Psoas muscle (tissue), 8 donors: ENCODE measurements at regions of chr5 and their contacts with region 1.

Region 1: GRCh38 chr5:173963867-173964441 is 25.0 kb upstream of the C5orf47 start:
- DNase-seq: no peak
- ATAC-seq: peak; percentile 18 to 35 (median 32)
- H3K4me3 ChIP-seq: peak overlapping the region; percentile 42
- H3K27ac ChIP-seq: peak overlapping the region; percentile 91
- H3K4me1 ChIP-seq: peaks cover 43% of the 10 kb centered on the region
- H3K27me3 ChIP-seq: no peaks in the 10 kb centered on the region
- CTCF ChIP-seq: no peak

Region 2: GRCh38 chr5:173925448-173926071 is 38.4 kb before region 1 on chr5:
- intact Hi-C with region 1: loop called in 1 of 2 experiments (anchors 5 kb)
- DNase-seq: no peak
- ATAC-seq: peak in 2 of 4 donors; percentile 22 to 31
- H3K4me3 ChIP-seq: no peak overlapping the region
- H3K27ac ChIP-seq: peak overlapping the region; percentile 94
- H3K4me1 ChIP-seq: peaks cover 95% of the 10 kb centered on the region
- H3K27me3 ChIP-seq: no peaks in the 10 kb centered on the region
- CTCF ChIP-seq: peak; percentile 41

Region 3: DNA sequence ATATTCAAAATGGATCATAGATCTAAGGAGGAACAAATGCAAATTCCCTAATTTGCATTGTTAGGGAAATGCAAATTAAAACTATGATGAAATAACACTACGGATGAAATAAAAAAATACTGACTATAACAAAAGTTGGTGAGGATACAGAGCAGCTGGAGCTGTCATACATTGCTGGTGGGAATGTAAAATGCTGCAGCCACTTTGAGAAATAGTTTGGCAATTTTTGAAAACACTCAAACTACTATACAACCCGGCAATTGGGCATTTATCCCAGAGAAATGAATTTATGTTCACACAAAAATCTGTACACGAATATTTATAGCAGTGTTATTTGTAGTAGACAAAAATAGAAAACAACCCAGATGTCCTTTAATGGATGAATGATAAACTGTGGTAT is 47.5 kb after region 1 on chr5:
- intact Hi-C with region 1: no loop called
- DNase-seq: no peak
- ATAC-seq: no peak
- H3K4me3 ChIP-seq: no peak overlapping the region
- H3K27ac ChIP-seq: no peak overlapping the region
- H3K4me1 ChIP-seq: no peaks in the 10 kb centered on the region
- H3K27me3 ChIP-seq: no peaks in the 10 kb centered on the region
- CTCF ChIP-seq: no peak